B cell (primary cell): ENCODE measurements at regions of chr1 and their contacts with region 1.

Region 1: GRCh38 chr1:110619412-110620249 is 13.5 kb upstream of the KCNA2 start:
- DNase-seq: peak; percentile 94
- ATAC-seq: peak; percentile 86
- H3K4me3 ChIP-seq: peak overlapping the region; percentile 16 to 77 (median 72)
- H3K4me3 Mint-ChIP-seq: peak overlapping the region; percentile 91
- H3K27ac ChIP-seq: peak overlapping the region; percentile 66 to 89
- H3K27ac Mint-ChIP-seq: peak overlapping the region; percentile 95
- H3K4me1 ChIP-seq: peaks cover 20 to 30% of the 10 kb centered on the region in 2 donors
- H3K4me1 Mint-ChIP-seq: peaks cover 30% of the 10 kb centered on the region
- H3K27me3 ChIP-seq: peaks cover 0 to 5% (median 2%) of the 10 kb centered on the region in 4 experiments
- H3K27me3 Mint-ChIP-seq: peaks cover 4% of the 10 kb centered on the region
- CTCF ChIP-seq: peak; percentile 95

Region 2: GRCh38 chr1:109191377-109191776 is 1428.3 kb before region 1 on chr1:
- CTCF ChIA-PET with region 1: no interaction called
- POLR2A ChIA-PET with region 1: no interaction called
- intact Hi-C with region 1: no loop called
- DNase-seq: no peak
- ATAC-seq: no peak
- H3K4me3 ChIP-seq: no peak overlapping the region
- H3K4me3 Mint-ChIP-seq: no peak overlapping the region
- H3K27ac ChIP-seq: no peak overlapping the region
- H3K27ac Mint-ChIP-seq: no peak overlapping the region
- H3K4me1 ChIP-seq: peaks cover 9 to 10% of the 10 kb centered on the region in 2 donors
- H3K4me1 Mint-ChIP-seq: peaks cover 10% of the 10 kb centered on the region
- H3K27me3 ChIP-seq: peaks cover 0 to 2% (median 0%) of the 10 kb centered on the region in 4 experiments
- H3K27me3 Mint-ChIP-seq: peaks cover 14% of the 10 kb centered on the region
- CTCF ChIP-seq: no peak

Region 3: GRCh38 chr1:110605901-110606656 is 13.6 kb before region 1 on chr1 and contains the start of gene KCNA2:
- CTCF ChIA-PET with region 1: interaction called, 31 read pairs
- POLR2A ChIA-PET with region 1: no interaction called
- intact Hi-C with region 1: no loop called
- DNase-seq: no peak
- ATAC-seq: peak; percentile 23
- H3K4me3 ChIP-seq: peak within 1 kb of the TSS; percentile 8 to 71 (median 50)
- H3K4me3 Mint-ChIP-seq: peak within 1 kb of the TSS; percentile 88
- H3K27ac ChIP-seq: no peak within 1 kb of the TSS
- H3K27ac Mint-ChIP-seq: no peak within 1 kb of the TSS
- H3K4me1 ChIP-seq: peaks cover 23 to 28% of the 10 kb centered on the region in 2 donors
- H3K4me1 Mint-ChIP-seq: peaks cover 25% of the 10 kb centered on the region
- H3K27me3 ChIP-seq: peaks cover 0 to 59% (median 37%) of the 10 kb centered on the region in 4 experiments
- H3K27me3 Mint-ChIP-seq: peaks cover 62% of the 10 kb centered on the region
- CTCF ChIP-seq: no peak
- total RNA-seq, gene KCNA2: 0.29 and 0.59 TPM in 2 replicates

Region 4: DNA sequence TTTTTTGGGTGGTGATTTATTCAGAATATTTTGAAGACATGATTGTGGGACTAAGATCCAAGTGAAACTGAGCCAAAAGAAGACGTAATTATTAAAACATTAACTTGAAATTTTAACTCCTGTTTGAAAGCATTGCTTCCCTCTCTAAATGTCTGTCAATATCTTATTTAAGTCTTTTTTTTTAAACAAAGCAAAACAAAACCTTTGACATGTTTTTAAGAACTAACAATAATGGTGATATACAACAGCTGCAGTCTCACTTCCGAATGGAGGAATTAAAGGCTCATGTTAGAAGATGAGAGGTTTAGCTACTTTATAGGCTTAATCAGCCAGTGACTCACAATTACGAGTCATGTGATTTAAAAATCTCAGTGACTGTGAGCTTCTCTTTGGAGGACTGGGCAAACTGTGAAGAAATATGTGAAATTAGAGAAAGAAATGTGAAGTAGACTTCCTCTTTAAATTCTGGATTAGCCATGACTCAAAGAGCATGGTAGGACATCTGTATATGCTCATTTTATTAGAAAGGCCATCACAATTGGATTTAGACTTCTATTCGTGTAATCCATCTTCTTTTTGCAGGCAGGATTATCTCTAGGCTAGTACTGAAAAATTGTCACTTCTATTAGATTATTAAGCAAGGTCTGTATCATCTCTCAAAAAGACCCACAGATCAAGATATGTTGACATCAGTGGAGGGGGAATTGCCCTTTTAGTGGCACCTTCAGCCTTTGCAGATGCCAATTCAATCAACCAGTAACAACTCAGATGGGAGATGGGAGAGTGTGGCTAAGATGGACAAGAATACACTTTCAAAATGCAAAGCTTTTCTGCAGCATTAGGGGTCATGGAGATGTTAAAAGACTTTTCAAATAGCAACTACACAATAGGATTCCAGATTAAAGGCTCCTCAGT is 26.4 kb after region 1 on chr1:
- CTCF ChIA-PET with region 1: interaction called, 17 read pairs
- POLR2A ChIA-PET with region 1: no interaction called
- intact Hi-C with region 1: no loop called
- DNase-seq: no peak
- ATAC-seq: no peak
- H3K4me3 ChIP-seq: no peak overlapping the region
- H3K4me3 Mint-ChIP-seq: no peak overlapping the region
- H3K27ac ChIP-seq: no peak overlapping the region
- H3K27ac Mint-ChIP-seq: no peak overlapping the region
- H3K4me1 ChIP-seq: peaks cover 13 to 15% of the 10 kb centered on the region in 2 donors
- H3K4me1 Mint-ChIP-seq: peaks cover 17% of the 10 kb centered on the region
- H3K27me3 ChIP-seq: no peaks in the 10 kb centered on the region
- H3K27me3 Mint-ChIP-seq: peaks cover 6% of the 10 kb centered on the region
- CTCF ChIP-seq: no peak

Region 5: GRCh38 chr1:110686188-110686587 is 66.6 kb after region 1 on chr1:
- CTCF ChIA-PET with region 1: interaction called, 15 read pairs
- POLR2A ChIA-PET with region 1: no interaction called
- intact Hi-C with region 1: no loop called
- DNase-seq: peak; percentile 48
- ATAC-seq: peak; percentile 78
- H3K4me3 ChIP-seq: no peak overlapping the region
- H3K4me3 Mint-ChIP-seq: no peak overlapping the region
- H3K27ac ChIP-seq: no peak overlapping the region
- H3K27ac Mint-ChIP-seq: no peak overlapping the region
- H3K4me1 ChIP-seq: no peaks in the 10 kb centered on the region
- H3K4me1 Mint-ChIP-seq: peaks cover 3% of the 10 kb centered on the region
- H3K27me3 ChIP-seq: no peaks in the 10 kb centered on the region
- H3K27me3 Mint-ChIP-seq: peaks cover 12% of the 10 kb centered on the region
- CTCF ChIP-seq: peak; percentile 31

Region 6: DNA sequence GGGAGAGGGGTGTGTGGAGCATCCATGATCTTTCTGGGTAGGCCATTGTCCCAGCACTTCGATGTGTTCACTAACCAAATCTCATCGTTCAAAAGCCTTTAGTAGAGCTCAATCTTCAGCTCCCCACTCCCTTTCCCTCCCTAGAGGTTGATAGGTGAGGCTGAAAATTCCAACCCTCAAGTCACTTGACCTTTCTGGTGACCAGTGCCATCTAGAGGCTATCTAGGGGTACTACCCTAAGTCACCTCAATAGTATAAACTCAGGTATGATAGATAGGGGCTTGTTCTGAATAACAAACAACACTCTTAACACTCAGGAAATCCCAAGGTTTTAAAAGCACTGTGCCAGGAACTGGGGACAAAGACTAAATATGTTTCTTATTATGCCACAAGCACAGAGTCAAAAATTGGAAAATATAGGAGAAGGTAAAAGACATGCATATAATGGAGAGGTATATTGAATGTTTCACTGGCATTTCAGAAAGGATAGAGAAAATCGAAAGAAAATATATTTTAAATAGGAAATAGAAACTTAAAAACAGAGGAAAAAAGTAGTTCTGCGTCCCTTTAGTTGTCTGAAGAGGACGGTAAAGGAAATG is 210.4 kb after region 1 on chr1:
- CTCF ChIA-PET with region 1: interaction called, 24 read pairs
- POLR2A ChIA-PET with region 1: no interaction called
- intact Hi-C with region 1: loop called (anchors 1 kb)
- DNase-seq: peak; percentile 74
- ATAC-seq: peak; percentile 88
- H3K4me3 ChIP-seq: no peak overlapping the region
- H3K4me3 Mint-ChIP-seq: no peak overlapping the region
- H3K27ac ChIP-seq: no peak overlapping the region
- H3K27ac Mint-ChIP-seq: no peak overlapping the region
- H3K4me1 ChIP-seq: peaks cover 8 to 9% of the 10 kb centered on the region in 2 donors
- H3K4me1 Mint-ChIP-seq: peaks cover 30% of the 10 kb centered on the region
- H3K27me3 ChIP-seq: no peaks in the 10 kb centered on the region
- H3K27me3 Mint-ChIP-seq: no peaks in the 10 kb centered on the region
- CTCF ChIP-seq: peak; percentile 94

Region 7: DNA sequence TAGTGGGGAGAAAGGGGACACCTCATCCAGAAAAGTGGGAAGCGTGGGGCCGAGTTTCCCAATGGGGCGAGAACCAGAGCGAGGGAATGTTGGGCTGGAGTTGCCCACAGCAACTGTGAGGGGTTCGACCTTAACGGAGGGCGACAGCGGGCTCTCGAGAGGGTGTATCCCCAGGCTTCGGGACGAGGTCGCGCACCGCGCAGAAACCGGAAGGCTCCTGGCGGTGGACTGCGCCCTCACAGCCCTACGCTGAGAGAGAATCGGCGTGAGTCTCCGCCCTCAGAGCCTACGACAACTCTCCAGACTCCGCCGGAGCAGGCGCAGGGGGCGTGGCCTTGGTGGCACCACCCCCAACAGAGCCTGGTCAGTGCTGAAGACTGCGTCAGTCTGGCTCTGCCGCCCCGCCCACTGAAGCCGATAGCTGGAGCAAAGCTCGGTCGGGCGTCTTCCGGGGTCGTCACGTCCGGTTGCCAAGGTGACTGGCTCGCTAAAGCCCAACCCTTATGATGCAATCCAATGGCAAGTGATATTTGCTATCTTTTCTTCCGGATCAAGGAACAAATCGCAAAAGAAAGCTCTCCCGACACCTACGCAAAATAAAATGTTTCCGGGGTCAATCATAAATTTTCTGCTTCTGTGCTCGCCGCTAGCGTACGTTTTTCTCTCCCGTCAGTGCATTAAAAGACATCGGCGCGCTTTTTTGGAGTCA is 344.2 kb after region 1 on chr1 and contains the start of gene LRIF1:
- CTCF ChIA-PET with region 1: interaction called, 7 read pairs
- POLR2A ChIA-PET with region 1: no interaction called
- intact Hi-C with region 1: loop called (anchors 1 kb)
- DNase-seq: peak; percentile 100
- ATAC-seq: peak; percentile 96
- H3K4me3 ChIP-seq: peak within 1 kb of the TSS; percentile 62 to 98 (median 82)
- H3K4me3 Mint-ChIP-seq: peak within 1 kb of the TSS; percentile 83
- H3K27ac ChIP-seq: peak within 1 kb of the TSS; percentile 95 to 98
- H3K27ac Mint-ChIP-seq: peak within 1 kb of the TSS; percentile 88
- H3K4me1 ChIP-seq: peaks cover 20 to 21% of the 10 kb centered on the region in 2 donors
- H3K4me1 Mint-ChIP-seq: peaks cover 30% of the 10 kb centered on the region
- H3K27me3 ChIP-seq: peaks cover 0 to 13% (median 7%) of the 10 kb centered on the region in 4 experiments
- H3K27me3 Mint-ChIP-seq: peaks cover 10% of the 10 kb centered on the region
- CTCF ChIP-seq: peak; percentile 60
- total RNA-seq, gene LRIF1: 22.6 and 26.5 TPM in 2 replicates